GM12878 (cell line): ENCODE measurements at regions of chr20 and their contacts with region 1.

Region 1: DNA sequence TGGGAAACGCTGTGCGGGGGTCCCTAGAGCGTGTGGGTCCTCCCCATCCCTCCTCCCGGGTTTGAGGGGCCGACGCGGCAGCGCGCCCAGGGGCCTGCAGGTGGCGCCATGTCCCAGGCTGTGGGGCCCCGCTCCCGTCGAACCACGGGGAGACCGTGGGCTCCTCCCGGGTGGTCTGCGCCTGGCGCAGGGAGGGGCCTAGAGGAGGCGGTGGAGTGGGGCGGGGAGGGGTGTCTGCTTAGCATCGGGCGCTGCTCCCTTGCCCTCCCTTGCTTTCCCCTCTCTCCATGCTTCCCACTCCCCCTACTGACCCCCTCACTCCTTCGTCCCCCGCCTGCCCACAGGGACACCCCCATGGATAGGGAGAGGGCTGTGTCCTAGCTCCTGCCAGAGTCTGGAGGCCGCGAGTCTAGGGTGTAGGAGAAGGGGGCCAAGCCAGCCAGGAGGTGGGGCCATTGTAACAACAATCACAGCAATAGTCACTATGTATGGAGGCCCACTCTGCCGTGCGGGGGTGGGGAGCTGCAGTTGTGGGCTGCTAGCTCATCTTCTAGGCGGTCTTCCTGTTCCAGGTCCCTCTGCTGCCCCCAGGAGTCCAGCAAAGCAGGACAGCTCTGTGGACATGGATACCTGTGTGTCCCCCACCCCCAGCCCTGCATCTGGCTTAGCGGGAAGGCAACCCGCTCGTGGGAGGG is 51.7 kb downstream of the CHMP4B start:
- DNase-seq: no peak
- ATAC-seq: peak; percentile 95
- H3K4me3 ChIP-seq: no peak overlapping the region
- H3K27ac ChIP-seq: peak overlapping the region; percentile 35; the same call in 1 of the 2 replicates
- H3K4me1 ChIP-seq: peaks cover 28% of the 10 kb centered on the region
- H3K27me3 ChIP-seq: no peaks in the 10 kb centered on the region
- CTCF ChIP-seq: peak; percentile 49 to 81 (median 70)
- EP300 ChIP-seq: no peak
- POLR2A ChIP-seq: no peak
- RAD21 ChIP-seq: peak; percentile 85

Region 2: DNA sequence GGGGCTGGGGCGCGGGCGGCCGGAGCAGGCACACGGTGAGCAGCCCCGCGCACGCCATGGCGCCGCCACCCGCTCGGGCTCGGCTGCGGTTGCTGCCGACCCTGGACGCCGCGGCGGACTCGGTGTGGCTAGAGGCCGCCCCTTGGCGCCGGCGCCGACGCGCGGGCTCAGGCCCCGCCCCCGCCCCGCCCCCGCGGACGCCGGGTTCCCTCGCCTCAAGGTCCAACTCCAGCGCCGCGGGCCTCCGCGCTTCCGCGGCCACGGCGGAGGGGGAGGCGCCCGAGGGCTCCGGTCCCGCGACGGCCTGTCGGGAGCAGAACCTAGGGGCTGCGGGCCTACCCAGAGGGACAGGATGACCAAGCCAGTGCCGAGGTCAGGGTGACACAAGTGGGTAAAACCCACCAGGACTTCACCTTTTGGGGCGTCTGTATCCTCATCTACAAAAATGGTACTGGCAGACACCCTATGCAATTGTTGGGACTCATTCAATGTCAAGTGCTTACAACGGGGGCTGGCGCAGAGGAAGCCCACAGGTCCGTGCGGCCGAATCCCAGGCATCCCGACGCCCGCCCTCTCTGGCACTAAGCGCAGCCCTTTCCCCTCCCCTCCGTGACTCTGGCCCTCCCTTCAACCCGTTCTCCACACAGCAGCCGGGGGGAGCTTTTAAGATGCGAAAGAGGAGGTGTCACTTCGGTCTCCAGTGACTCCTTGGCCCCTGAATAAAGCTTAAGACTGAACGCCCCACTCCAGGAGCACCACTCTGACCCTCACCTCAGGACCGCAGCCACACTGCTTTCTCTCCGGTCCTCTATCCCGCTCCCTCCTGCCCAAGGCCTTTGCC is 188.3 kb before region 1 on chr20 and contains the start of gene NECAB3:
- CTCF ChIA-PET with region 1: no interaction called
- POLR2A ChIA-PET with region 1: no interaction called
- RAD21 ChIA-PET with region 1: no interaction called
- SMC1A ChIA-PET with region 1: no interaction called
- in situ Hi-C with region 1: no loop called
- intact Hi-C with region 1: no loop called
- DNase-seq: no peak
- ATAC-seq: peak; percentile 90
- H3K4me3 ChIP-seq: peak within 1 kb of the TSS; percentile 79
- H3K27ac ChIP-seq: peak within 1 kb of the TSS; percentile 46; the same call in 1 of the 2 replicates
- H3K4me1 ChIP-seq: peaks cover 14% of the 10 kb centered on the region
- H3K27me3 ChIP-seq: no peaks in the 10 kb centered on the region
- CTCF ChIP-seq: no peak
- EP300 ChIP-seq: no peak
- POLR2A ChIP-seq: peak; percentile 56
- RAD21 ChIP-seq: no peak
- polyA plus RNA-seq, gene NECAB3: 0.21 to 1.3 TPM

Region 3: DNA sequence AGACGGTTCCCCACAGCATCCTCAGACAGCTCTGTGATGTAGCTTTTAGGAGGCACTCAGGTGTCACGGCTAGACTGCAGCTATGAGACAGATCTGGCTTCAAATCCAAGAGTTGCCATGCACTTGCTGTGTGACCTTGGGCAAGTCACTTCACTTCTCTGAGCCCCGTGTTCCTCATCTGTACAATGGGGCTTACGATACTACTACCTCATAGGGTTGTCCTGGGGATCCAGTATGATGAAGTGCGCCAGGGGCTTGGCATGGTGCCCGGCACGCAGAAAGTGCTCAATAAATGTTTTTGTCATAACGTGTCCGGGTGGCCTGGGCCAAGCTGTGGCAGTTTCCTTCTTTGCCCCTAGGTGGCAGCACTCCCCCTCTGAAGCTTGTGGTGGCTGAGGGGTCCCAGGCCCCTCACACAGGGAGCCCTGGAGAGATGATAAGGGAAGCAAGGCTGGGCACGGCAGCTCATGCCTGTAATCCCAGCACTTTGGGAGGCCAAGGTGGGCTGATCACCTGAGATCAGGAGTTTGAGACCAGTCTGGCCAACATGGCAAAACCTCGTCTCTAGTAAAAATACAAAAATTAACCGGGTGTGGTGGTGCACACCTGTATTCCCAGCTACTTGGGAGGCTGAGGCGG is 70.8 kb before region 1 on chr20:
- CTCF ChIA-PET with region 1: interaction called, 6 read pairs
- POLR2A ChIA-PET with region 1: no interaction called
- RAD21 ChIA-PET with region 1: no interaction called
- SMC1A ChIA-PET with region 1: no interaction called
- in situ Hi-C with region 1: no loop called
- intact Hi-C with region 1: loop called (anchors 1 kb)
- DNase-seq: no peak
- ATAC-seq: peak; percentile 82
- H3K4me3 ChIP-seq: no peak overlapping the region
- H3K27ac ChIP-seq: no peak overlapping the region
- H3K4me1 ChIP-seq: no peaks in the 10 kb centered on the region
- H3K27me3 ChIP-seq: no peaks in the 10 kb centered on the region
- CTCF ChIP-seq: peak; percentile 56 to 78 (median 69)
- EP300 ChIP-seq: no peak
- POLR2A ChIP-seq: no peak
- RAD21 ChIP-seq: peak; percentile 65

Region 4: DNA sequence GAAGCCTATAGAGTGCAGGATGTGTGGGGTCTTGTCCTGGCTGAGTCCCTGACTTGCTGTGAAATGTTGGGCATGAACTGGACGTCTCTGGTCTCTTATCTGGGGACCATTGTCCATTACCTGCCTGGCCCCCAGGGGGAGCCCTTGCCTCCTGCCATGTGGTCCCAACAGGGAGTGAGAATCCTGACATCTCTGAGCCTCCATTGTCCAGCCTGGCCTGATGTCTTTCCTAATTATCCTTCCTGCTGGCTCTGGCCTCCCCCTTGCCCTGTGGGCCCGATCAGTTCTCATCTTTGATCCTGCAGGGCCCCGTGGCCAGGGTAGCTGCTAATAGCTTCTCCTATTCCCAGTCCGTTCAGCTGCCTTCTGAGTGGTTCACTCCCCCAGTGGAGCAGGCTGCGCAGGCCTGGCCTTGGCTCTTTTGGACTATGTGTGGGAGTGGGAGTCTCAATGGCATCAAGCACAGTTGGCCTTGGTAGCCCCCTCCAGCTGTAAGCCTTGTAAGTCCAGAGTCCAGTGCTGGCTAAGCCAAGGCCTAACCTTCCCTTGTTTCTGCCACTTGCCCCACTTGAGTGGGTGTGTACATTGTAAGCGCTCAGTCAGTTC is 53.0 kb after region 1 on chr20:
- CTCF ChIA-PET with region 1: interaction called, 9 read pairs
- POLR2A ChIA-PET with region 1: no interaction called
- RAD21 ChIA-PET with region 1: interaction called, 8 read pairs
- SMC1A ChIA-PET with region 1: interaction called, 4 read pairs
- in situ Hi-C with region 1: no loop called
- intact Hi-C with region 1: loop called (anchors 5 kb)
- DNase-seq: no peak
- ATAC-seq: peak; percentile 83
- H3K4me3 ChIP-seq: no peak overlapping the region
- H3K27ac ChIP-seq: no peak overlapping the region
- H3K4me1 ChIP-seq: peaks cover 11% of the 10 kb centered on the region
- H3K27me3 ChIP-seq: no peaks in the 10 kb centered on the region
- CTCF ChIP-seq: peak; percentile 63 to 84 (median 70)
- EP300 ChIP-seq: no peak
- POLR2A ChIP-seq: no peak
- RAD21 ChIP-seq: peak; percentile 21; the same call in 1 of the 2 replicates

Region 5: DNA sequence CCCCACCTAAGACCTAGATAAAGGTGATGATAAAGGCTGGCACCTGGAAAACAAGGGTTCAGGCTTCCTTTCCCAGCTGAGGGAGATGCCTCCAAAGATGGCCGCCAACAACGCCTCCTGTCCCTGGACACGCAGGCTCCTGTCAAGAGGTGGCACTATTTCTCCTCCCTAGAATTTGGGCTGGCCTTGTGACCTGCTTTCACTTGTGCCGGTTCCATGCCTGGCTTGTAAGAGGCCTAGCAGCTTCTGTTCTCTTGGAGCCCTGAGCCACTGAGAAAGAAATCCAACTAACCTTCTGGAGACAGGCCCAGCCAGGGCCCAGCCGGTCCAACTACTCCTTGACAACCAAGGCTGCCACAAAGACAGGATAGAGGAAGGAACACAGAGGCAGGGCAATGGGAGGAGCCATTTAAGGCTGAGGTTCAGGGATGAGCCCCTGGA is 70.6 kb after region 1 on chr20:
- CTCF ChIA-PET with region 1: no interaction called
- POLR2A ChIA-PET with region 1: no interaction called
- RAD21 ChIA-PET with region 1: no interaction called
- SMC1A ChIA-PET with region 1: no interaction called
- in situ Hi-C with region 1: no loop called
- intact Hi-C with region 1: loop called (anchors 5 kb)
- DNase-seq: no peak
- ATAC-seq: peak; percentile 87
- H3K4me3 ChIP-seq: no peak overlapping the region
- H3K27ac ChIP-seq: no peak overlapping the region
- H3K4me1 ChIP-seq: no peaks in the 10 kb centered on the region
- H3K27me3 ChIP-seq: no peaks in the 10 kb centered on the region
- CTCF ChIP-seq: peak; percentile 50 to 61 (median 58); a peak in 5 of 6 replicates
- EP300 ChIP-seq: no peak
- POLR2A ChIP-seq: no peak
- RAD21 ChIP-seq: peak; percentile 87

Region 6: DNA sequence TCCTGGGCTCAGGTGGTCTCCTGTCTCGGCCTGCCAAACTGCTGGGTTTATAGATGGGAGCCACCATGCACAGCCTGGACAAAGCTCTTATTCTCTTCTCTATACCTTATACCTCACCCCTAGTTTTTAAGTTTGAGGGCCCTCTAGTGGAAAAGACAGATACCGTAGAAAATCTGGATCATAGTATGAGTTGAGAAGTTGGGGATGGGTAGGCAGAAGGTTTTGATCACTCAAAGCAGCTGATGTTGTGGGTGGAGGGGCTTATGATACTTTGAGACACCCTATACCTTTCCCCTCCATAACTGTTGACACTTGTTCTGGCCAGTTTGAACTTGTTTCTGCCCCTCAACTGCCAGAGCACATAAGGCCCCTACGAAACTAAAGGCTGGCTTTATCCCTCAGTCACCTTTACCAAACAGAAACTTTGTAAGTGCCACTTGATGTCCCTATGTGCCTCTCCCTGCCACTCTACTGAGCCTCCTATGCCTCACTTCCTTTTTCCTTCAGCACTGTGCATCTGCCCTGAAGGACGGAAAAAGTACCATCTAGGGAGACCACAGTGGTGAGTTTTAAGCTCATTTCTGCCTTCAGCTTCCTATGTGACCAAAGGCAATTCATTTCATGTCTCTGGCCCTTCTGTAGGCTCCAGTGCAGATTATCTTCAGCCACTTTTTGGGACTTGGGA is 159.4 kb after region 1 on chr20:
- CTCF ChIA-PET with region 1: interaction called, 5 read pairs
- POLR2A ChIA-PET with region 1: no interaction called
- RAD21 ChIA-PET with region 1: interaction called, 12 read pairs
- SMC1A ChIA-PET with region 1: interaction called, 3 read pairs
- in situ Hi-C with region 1: no loop called
- intact Hi-C with region 1: loop called (anchors 1 kb)
- DNase-seq: peak; percentile 63
- ATAC-seq: peak; percentile 88
- H3K4me3 ChIP-seq: no peak overlapping the region
- H3K27ac ChIP-seq: peak overlapping the region; percentile 63
- H3K4me1 ChIP-seq: peaks cover 20% of the 10 kb centered on the region
- H3K27me3 ChIP-seq: no peaks in the 10 kb centered on the region
- CTCF ChIP-seq: peak; percentile 44 to 54 (median 48)
- EP300 ChIP-seq: 0 out of 4 replicates have a peak, but pooled peaks of 1 of the 2 experiments have one; percentile 10
- POLR2A ChIP-seq: no peak
- RAD21 ChIP-seq: peak; percentile 70

Region 7: GRCh38 chr20:34069341-34070078 is 206.7 kb after region 1 on chr20:
- CTCF ChIA-PET with region 1: interaction called, 11 read pairs
- POLR2A ChIA-PET with region 1: interaction called, 3 read pairs
- RAD21 ChIA-PET with region 1: interaction called, 7 read pairs
- SMC1A ChIA-PET with region 1: interaction called, 17 read pairs
- in situ Hi-C with region 1: loop called (anchors 5 kb)
- intact Hi-C with region 1: loop called (anchors 1 kb)
- DNase-seq: peak; percentile 30
- ATAC-seq: peak; percentile 97
- H3K4me3 ChIP-seq: no peak overlapping the region
- H3K27ac ChIP-seq: no peak overlapping the region
- H3K4me1 ChIP-seq: no peaks in the 10 kb centered on the region
- H3K27me3 ChIP-seq: no peaks in the 10 kb centered on the region
- CTCF ChIP-seq: peak; percentile 76 to 86 (median 78)
- EP300 ChIP-seq: no peak
- POLR2A ChIP-seq: no peak
- RAD21 ChIP-seq: peak; percentile 91

Region 8: DNA sequence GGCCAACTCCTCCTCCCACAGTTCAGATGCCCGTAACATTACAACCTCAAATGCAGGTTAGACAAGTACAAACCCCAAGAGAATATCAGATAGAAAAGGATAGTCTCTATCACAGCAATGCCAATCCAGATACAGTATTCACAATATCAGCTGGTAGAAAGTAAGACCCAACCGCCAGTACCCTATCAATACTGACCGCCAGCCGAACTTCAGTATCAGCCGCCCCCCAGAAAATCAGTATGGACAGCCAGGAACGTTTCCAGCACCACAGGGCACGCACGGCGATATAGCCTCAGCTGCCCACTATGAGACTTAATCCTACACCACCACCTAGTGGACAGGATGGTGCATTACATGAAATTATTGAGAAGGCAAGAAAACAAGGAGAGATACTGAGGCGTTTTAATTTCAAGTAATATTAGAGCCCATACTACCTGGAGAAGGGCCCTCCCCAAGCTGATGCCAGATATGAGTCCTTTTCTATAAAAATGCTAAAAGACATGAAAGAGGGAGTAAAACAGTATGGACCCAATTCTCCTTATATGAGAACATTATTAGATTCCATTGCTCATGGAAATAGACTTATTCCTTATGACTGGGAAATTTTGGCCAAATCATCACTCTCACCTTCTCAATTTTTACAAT is 266.8 kb after region 1 on chr20:
- CTCF ChIA-PET with region 1: interaction called, 12 read pairs
- POLR2A ChIA-PET with region 1: no interaction called
- RAD21 ChIA-PET with region 1: interaction called, 5 read pairs
- SMC1A ChIA-PET with region 1: interaction called, 4 read pairs
- in situ Hi-C with region 1: loop called (anchors 10 kb)
- intact Hi-C with region 1: loop called (anchors 1 kb)
- DNase-seq: peak; percentile 9
- ATAC-seq: peak; percentile 96
- H3K4me3 ChIP-seq: no peak overlapping the region
- H3K27ac ChIP-seq: no peak overlapping the region
- H3K4me1 ChIP-seq: peaks cover 1% of the 10 kb centered on the region; the same call in 1 of the 2 replicates
- H3K27me3 ChIP-seq: peaks cover 0 to 2% of the 10 kb centered on the region in 2 experiments; a peak in 2 of 4 replicates
- CTCF ChIP-seq: peak; percentile 73 to 90 (median 76)
- EP300 ChIP-seq: no peak
- POLR2A ChIP-seq: no peak
- RAD21 ChIP-seq: peak; percentile 97